Common myeloid progenitor, CD34-positive (primary cell): ENCODE measurements at regions of chr2 and their contacts with region 1.

Region 1: DNA sequence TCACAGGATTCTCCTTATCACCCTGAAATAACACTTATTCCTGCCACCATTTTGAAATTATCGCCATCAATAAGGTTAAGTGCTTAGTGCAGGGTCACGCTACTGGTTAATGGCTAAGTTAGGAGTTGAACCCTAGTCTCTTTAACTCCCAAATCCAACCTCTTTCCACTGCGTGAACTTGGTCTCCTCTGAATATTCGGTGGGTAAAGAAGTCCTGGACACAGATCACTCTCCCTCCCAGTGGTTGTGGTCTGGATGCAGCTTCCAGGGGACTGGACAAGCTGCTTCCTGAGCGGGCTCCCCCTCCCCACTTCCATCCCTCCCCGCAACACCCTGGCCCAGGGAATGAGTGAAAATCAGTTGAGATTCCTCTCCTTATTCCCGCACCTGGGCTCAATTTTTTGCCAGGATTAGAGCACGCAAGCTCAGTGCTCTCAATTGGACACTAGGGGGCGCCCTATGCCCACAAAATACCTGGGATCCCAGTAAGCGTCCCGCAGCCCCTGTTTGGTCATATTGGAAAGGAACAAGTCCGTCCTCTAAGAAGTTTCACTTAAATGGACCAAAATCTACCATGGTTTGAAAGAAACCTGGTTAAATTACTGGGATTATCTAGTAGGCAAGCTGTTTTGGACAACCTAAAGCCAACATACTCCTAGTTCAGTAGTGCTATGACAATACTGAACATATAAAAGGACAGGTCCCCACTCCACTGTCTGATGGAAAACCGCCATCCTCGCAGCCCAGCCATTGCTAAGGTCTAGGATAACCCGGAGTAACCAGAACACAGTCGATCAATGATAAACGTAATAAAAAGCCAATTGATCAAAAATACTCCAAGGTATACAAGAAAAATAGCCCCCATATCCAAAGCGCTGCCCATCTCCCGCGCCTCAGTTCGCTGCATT is 40.4 kb downstream of the DHRS9 start:
- DNase-seq: peak; percentile 81 to 85 (median 84)
- H3K4me3 ChIP-seq: peak overlapping the region in 2 of 7 experiments; percentile 21 to 25
- H3K27ac ChIP-seq: no peak overlapping the region
- H3K4me1 ChIP-seq: peaks cover 41 to 57% (median 46%) of the 10 kb centered on the region in 4 experiments
- H3K27me3 ChIP-seq: no peaks in the 10 kb centered on the region

Region 2: GRCh38 chr2:168956392-168956791 is 153.4 kb before region 1 on chr2:
- CTCF ChIA-PET with region 1: interaction called, 15 read pairs
- POLR2A ChIA-PET with region 1: no interaction called
- DNase-seq: no peak
- H3K4me3 ChIP-seq: no peak overlapping the region
- H3K27ac ChIP-seq: no peak overlapping the region
- H3K4me1 ChIP-seq: no peaks in the 10 kb centered on the region
- H3K27me3 ChIP-seq: no peaks in the 10 kb centered on the region

Region 3: DNA sequence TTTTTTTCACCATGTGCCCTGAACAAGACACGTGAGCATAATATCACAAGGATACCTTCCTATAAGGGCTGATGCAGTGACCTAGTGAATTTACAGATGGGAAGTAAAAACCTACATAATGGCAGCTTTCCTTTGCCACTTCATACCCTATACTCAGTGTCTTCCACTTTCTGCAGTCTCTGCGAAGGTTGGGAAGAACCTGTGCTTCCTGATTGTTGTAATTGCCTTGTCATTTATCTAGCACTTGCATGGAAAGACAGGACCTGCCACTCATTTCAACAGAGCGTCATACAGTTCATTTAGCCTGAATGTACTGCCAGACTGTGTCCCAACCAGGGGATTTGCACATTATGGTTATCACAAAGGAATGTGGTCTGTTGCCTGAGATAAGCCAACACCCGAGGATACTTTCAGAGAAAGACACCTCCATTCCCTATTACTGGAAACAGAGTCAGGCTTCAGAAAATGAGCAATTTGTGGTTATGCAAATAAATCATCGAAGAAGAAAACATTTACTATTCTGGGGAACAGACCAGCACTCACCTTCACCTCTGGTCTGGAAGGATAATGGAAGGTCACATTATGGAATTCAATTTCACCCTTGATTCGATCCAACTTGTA is 133.6 kb before region 1 on chr2:
- CTCF ChIA-PET with region 1: no interaction called
- POLR2A ChIA-PET with region 1: no interaction called
- DNase-seq: peak in 2 of 3 donors; percentile 50 to 67
- H3K4me3 ChIP-seq: no peak overlapping the region
- H3K27ac ChIP-seq: no peak overlapping the region
- H3K4me1 ChIP-seq: peaks cover 0 to 2% (median 0%) of the 10 kb centered on the region in 4 experiments
- H3K27me3 ChIP-seq: no peaks in the 10 kb centered on the region

Region 4: DNA sequence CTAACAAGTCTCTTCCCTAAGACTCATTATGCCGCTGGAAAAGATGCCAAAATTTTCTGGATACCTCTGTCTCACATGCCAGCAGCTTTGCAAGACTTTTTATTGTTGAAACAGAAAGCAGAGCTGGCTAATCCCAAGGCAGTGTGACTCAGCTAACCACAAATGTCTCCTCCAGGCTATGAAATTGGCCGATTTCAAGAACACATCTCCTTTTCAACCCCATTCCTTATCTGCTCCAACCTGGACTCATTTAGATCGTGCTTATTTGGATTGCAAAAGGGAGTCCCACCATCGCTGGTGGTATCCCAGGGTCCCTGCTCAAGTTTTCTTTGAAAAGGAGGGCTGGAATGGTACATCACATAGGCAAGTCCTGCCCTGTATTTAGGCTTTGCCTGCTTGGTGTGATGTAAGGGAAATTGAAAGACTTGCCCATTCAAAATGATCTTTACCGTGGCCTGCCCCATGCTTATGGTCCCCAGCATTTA is 14.1 kb before region 1 on chr2:
- CTCF ChIA-PET with region 1: interaction called, 23 read pairs
- POLR2A ChIA-PET with region 1: interaction called, 3 read pairs
- DNase-seq: peak; percentile 62 to 92 (median 89)
- H3K4me3 ChIP-seq: peak overlapping the region in 4 of 7 experiments; percentile 16 to 42 (median 32)
- H3K27ac ChIP-seq: no peak overlapping the region
- H3K4me1 ChIP-seq: peaks cover 8 to 26% (median 14%) of the 10 kb centered on the region in 4 experiments
- H3K27me3 ChIP-seq: no peaks in the 10 kb centered on the region

Region 5: DNA sequence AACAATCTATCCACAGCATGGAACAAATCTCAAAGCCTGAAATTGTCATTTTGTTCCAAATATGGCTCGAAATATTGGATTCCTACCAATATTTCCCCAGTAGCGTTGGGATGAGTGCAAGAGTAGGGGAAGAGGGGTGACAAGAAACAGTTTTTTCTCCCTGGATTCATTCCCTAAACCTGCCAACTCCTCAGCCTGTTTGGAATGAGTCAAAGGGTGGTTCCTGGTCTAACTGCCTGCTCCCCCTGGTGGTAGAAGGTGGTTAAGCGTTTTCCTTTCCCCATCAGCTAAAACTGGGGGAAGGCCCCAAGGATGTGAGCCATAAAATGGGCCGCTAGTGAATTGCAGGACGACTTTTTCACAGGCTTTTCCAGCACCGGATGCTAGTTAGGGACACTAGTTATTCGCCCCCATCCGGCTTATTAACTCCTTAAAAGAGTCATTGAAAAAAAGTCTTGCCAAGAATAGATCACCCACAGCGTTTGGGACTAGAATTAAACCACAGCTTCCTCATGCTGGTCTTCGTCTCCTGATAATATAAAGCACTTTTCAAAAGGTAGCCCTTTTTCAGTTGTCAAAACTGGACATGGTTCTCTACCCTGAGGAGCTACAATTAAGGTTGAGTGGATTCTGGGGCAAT is 32.1 kb after region 1 on chr2:
- CTCF ChIA-PET with region 1: interaction called, 24 read pairs
- POLR2A ChIA-PET with region 1: no interaction called
- DNase-seq: peak; percentile 44 to 66 (median 54)
- H3K4me3 ChIP-seq: peak overlapping the region in 1 of 7 experiments; percentile 9
- H3K27ac ChIP-seq: no peak overlapping the region
- H3K4me1 ChIP-seq: peaks cover 0 to 17% (median 7%) of the 10 kb centered on the region in 4 experiments
- H3K27me3 ChIP-seq: no peaks in the 10 kb centered on the region

Region 6: GRCh38 chr2:169275696-169276444 is 166.1 kb after region 1 on chr2:
- CTCF ChIA-PET with region 1: interaction called, 20 read pairs
- POLR2A ChIA-PET with region 1: no interaction called
- DNase-seq: peak; percentile 38 to 65 (median 59)
- H3K4me3 ChIP-seq: no peak overlapping the region
- H3K27ac ChIP-seq: no peak overlapping the region
- H3K4me1 ChIP-seq: peaks cover 0 to 6% (median 0%) of the 10 kb centered on the region in 4 experiments
- H3K27me3 ChIP-seq: no peaks in the 10 kb centered on the region